ENCODE measurements at regions of chr16 and their contacts with region 1.

Region 1: GRCh38 chr16:17301593-17302135 is 169.1 kb downstream of the XYLT1 start:
- DNase-seq: peak; percentile 75

Region 2: DNA sequence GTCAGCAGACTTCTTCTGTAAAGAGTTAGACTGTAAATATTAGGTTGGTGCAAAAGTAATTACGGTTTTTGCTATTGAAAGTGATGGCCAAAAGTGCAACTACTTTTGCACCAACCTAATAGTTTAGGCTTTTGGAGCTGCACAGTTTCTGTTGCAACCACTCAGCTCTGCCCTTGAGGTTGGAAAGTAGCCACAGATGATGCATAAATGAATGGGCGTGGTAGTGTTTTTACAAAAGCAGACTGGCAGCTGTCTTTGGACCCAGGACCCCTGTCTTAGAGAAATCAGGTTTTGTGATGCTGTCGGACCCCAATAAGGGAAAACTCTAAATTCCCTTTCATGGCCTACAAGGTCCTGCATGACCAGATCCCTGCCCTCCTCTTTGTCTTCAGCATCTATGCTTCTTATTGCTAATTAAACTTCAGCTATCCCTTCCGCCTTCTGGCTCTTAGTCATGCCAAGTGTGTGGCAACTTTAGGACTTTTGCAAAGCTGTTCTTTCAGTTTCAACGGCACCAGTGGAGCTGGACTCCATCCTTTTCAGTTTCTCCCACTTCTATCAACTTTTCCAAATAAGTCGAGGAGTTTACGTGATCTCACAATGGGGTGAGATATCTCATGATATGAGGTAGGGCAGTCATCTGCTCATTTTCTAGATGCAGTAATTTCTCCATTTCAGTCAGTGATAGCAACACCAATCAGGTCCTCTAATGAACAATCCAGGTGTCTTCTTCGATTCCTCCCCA is 63.2 kb before region 1 on chr16:
- in situ Hi-C with region 1: no loop called
- DNase-seq: no peak

Region 3: DNA sequence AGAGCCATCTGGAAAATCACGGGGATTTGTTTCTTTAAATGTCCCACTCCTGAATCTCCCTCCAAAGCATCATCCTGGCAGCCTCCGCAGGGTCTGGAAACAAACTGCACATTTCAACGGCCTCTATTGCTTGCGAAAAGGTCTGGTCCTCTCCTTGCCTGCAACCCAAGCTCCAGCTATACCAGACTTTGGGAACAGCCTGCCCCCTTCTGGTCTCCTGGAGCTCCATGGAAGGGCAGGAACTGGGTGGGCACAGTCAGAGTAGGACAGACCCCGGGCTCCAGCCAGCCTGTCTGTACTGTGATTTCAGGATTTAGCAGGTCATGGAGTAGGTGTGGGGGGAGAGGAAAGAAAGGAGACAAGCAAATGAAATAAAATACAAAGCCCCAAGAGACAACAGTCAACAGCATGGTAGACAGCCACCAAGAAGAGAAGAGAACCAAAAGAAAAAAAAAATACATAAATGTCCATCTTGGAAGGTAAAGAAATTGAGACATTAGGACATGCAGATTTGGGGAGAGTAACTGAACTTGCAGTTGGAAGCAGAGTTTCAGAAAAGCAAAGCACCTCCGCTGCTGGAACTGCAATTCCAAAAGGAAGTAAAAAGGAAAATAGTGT is 166.4 kb after region 1 on chr16:
- in situ Hi-C with region 1: loop called (anchors 25 kb)
- DNase-seq: peak; percentile 59

Region 4: DNA sequence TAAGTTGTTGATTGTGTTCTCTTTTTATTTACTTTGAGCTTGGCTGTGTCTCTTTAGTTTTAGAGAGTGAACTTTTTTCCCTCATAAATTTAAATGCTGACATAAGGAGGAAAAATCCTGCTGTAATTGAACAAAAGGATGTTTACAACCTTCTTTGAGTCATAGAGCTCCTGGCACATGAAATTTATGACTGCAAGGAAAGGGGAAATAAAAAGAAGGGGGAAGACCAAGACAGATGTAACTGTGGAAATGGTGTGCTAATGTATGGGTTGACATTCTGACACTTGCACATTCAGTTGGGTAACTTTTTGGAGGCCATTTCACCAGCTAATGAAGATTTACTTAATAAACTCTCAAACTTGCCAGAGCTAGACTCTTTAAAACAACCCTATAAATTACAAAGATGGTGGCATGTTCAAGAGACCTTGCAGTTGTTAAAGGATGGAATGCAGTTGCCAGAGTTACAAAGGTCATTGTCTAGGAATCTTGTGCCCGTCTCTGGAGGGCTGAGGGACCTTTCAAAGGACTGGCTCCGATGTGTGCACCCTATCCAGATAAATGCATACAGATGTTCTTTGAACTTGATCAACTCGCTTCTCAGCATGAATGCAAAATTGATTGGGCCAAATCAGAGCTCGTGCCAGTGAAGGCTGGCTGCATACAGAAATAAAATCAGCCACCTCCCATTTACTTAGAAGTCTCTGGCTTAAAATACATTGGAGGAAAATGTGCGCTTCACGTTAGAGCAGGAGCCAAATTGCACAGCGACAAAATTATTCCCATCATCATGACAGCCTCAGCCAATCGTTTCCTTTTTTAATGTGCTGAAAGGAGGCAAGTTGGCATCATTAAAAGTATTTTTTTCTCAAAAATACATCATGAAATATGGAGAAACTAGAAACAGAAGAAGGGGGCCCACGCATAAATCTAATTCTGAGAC is 458.1 kb after region 1 on chr16:
- in situ Hi-C with region 1: no loop called
- DNase-seq: no peak